Activated T-helper 1 cell treated with anti-CD3 and anti-CD28 coated beads, Interleukin-12 subunit alpha, Interleukin-12 subunit beta, Interleukin-2, Interleukin-4 antibody, amounts not matched to agents 30 ng/mL and 10 ng/mL and 1 ng/mL, durations not matched to agents 14 hours and 24 hours and 36 hours (primary cell): ENCODE measurements at regions of chr6 and their contacts with region 1.

Region 1: DNA sequence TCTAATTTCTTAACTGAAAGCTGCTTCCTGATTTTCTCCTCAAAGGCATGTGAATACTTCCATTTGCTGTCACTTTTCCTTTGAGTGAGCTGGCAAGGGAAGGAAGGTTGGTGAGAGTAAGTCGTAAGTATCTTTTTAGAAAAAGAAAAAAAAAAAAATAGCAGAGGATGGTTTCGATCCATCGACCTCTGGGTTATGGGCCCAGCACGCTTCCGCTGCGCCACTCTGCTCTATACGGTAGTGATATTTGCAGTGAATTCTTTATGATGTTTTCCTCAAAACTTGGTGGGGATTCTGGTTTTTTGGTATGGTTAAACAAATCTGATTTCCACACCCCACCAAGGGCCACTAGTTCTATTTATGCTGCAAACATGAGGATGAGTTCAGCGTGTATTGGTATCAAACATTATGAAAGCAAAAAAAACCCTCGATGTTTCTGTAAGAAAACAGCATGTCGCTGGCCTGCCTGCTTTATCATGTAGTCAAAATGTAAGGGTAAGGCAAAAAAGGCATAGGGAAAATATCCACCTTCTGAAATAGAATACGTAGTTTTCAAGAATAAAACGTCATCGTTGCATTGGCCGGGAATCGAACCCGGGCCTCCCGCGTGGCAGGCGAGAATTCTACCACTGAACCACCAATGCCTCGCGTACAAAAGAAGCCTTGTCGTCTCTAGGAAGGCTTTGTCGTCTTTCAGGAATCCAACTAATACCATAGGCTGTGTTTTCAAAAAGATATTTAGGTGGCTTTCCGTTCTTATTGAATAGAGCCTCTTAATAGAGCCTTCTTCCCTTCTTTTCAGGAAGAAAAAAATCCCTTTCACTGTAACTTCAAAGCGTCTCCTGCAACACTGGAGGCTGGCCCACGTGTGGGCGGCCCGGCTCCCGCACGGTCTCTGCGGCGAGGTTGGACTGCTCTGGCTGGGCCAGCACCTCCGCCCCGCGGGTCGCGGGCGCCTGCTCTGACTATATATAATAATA is 9.6 kb downstream of the OR2B2 start:
- DNase-seq: peak; percentile 77
- H3K4me3 Mint-ChIP-seq: peak overlapping the region; percentile 79
- H3K27ac Mint-ChIP-seq: peak overlapping the region; percentile 95
- H3K4me1 Mint-ChIP-seq: peaks cover 24% of the 10 kb centered on the region
- H3K27me3 Mint-ChIP-seq: peaks cover 26% of the 10 kb centered on the region

Region 2: GRCh38 chr6:27177485-27178406 is 724.9 kb before region 1 on chr6:
- intact Hi-C with region 1: loop called (anchors 2 kb)
- DNase-seq: peak; percentile 66
- H3K4me3 Mint-ChIP-seq: peak overlapping the region; percentile 95
- H3K27ac Mint-ChIP-seq: peak overlapping the region; percentile 93
- H3K4me1 Mint-ChIP-seq: peaks cover 7% of the 10 kb centered on the region
- H3K27me3 Mint-ChIP-seq: peaks cover 36% of the 10 kb centered on the region

Region 3: DNA sequence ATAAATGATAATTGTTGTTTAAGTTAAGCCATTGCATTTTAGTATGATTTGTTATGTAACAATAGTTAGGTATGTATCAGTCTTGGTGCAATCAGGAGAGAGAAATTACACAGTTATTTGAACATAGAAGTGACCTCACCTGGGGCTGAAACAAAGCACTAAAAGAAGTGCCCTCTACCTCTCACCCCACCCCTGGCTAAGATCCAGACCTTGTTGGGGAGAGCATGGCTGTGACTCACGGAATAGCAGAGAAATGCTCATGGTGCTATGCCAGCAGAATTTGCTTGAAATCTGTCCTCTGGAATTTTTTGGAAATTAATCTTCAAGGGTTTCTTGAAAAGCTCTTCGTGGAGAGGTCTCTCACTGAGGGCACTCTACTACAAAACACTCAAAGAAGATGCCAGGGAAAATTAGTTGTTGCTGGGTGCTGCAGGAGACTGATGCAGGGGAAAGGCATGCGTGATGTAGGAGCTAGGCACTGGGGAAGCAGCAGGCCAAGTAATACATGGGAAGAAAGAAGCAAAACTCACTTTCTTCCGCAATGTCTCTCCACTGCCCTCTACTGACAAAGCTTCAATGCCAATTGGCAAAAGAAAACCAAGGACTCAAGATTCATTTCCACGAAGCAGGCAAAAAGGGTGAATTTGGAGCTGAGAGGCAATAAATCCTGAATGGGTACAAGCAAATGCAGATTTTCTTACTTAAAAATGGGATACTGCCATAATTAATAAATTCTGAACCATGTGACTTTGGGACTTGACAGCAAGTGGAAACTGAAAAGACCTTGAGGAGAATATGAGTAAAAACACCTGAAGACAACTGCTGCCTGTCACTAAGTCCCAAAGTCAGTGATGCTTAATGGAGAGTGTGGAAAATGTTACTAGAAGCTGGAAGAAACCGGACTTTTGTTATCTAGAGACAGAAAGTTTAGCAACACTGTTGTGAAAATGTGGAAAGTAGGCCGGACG is 293.4 kb before region 1 on chr6:
- intact Hi-C with region 1: loop called (anchors 10 kb)
- DNase-seq: no peak
- H3K4me3 Mint-ChIP-seq: no peak overlapping the region
- H3K27ac Mint-ChIP-seq: no peak overlapping the region
- H3K4me1 Mint-ChIP-seq: peaks cover 18% of the 10 kb centered on the region
- H3K27me3 Mint-ChIP-seq: peaks cover 28% of the 10 kb centered on the region

Region 4: DNA sequence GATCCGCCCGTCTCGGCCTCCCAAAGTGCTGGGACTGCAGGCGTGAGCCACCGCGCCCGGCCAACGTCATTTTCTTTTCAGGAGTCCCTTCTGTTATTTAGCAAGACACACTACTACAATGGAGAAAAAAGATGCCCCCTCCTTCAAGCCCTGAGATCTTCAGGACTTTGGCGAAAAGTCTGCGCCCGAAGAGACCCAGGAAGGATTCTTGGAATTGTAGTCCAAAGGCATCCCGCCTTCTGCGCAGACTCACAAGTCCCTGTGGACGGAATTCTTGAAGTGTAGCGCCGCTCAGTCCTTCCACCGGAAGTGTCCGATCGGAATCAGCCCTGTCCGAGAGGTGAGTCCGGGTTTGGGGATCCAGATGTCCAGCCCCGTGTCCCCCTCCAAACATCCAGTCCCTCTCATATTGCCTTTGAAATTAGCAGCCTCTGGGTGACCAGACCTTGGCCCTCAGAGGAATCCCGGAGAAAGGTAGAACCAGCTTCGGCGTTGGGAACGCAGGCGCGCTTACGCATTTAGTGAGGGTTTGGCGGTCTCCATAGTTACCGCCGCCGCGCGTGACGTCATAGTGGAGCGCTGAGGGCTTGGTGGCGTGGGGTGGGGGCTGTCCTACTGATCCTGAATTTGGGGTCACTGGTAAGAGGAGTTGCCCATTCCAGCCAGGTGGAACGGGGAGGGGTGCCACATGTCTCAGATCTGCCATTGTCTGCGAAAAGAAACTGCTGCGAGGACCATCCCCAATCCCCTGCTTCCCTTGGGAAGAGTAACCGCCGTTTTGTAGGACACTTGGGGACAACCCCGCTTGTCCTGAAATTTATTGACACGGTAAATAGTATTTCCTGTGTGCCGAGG is 178.2 kb after region 1 on chr6:
- intact Hi-C with region 1: loop called (anchors 2 kb)
- DNase-seq: peak; percentile 82
- H3K4me3 Mint-ChIP-seq: peak overlapping the region; percentile 96
- H3K27ac Mint-ChIP-seq: peak overlapping the region; percentile 96
- H3K4me1 Mint-ChIP-seq: peaks cover 21% of the 10 kb centered on the region
- H3K27me3 Mint-ChIP-seq: peaks cover 2% of the 10 kb centered on the region

Region 5: DNA sequence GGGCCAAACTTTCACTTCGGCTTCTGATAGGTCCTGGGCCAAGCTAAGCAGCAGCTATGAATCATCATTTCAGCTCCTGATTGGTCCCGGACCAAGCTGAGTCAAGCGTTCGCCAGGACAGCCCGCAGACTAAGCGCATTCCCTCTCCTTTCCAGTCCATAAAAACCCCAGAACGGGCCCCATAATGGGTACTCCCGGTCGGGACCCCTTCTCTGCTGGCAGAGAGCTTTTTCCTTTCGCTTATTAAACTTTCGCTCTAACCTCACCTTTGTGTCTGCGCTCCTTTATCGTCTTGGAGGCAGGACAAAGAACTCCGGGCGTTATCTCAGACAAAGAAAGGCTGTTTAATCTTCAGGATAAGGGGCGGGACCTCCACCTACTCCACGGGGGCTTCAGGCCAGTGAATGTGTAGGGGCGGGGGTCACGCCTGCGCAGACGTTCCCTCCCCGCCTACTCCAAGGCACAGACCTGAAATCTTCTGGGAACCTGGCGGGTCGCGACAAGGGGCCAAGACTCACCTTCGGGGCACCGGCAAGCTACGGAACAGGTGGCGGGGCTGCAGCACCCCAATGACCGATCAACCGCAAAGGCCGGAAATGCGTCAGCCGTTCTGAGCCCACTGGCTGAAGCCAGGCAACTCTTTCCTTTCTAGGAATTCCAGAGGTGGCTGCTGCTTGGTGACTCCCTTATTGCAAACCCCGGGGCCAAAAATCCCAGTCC is 433.1 kb after region 1 on chr6 and contains the start of gene ZSCAN31:
- intact Hi-C with region 1: loop called (anchors 5 kb)
- DNase-seq: peak; percentile 56
- H3K4me3 Mint-ChIP-seq: no peak within 1 kb of the TSS
- H3K27ac Mint-ChIP-seq: no peak within 1 kb of the TSS
- H3K4me1 Mint-ChIP-seq: no peaks in the 10 kb centered on the region
- H3K27me3 Mint-ChIP-seq: peaks cover 7% of the 10 kb centered on the region
- total RNA-seq, gene ZSCAN31: 1.0 and 1.2 TPM in 2 replicates

Region 6: DNA sequence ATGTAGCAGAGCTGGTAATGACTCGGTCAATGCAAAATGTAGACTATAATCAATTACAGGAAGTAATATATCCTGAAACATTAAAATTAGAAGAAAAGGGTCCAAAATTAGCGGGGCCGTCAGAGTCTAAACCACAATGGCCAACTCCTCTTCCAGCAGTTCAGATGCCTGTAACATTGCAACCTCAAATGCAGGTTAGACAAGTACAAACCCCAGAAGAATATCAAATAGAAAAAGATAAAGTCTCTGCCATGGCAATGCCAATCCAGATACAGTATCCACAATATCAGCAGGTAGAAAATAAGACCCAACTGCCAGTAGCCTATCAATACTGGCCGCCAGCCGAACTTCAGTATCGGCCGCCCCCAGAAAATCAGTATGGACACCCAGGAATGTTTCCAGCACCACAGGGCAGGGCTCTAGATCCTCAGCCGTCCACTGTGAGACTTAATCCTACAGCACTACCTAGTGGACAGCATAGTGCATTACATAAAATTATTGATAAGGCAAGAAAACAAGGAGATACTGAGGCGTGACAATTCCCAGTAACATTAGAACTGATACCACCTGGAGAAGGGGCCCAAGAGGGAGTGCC is 781.4 kb after region 1 on chr6:
- intact Hi-C with region 1: loop called (anchors 10 kb)
- DNase-seq: no peak
- H3K4me3 Mint-ChIP-seq: no peak overlapping the region
- H3K27ac Mint-ChIP-seq: no peak overlapping the region
- H3K4me1 Mint-ChIP-seq: peaks cover 19% of the 10 kb centered on the region
- H3K27me3 Mint-ChIP-seq: peaks cover 65% of the 10 kb centered on the region

Region 7: GRCh38 chr6:28895134-28895812 is 992.6 kb after region 1 on chr6:
- intact Hi-C with region 1: loop called (anchors 5 kb)
- DNase-seq: peak; percentile 89
- H3K4me3 Mint-ChIP-seq: peak overlapping the region; percentile 90
- H3K27ac Mint-ChIP-seq: peak overlapping the region; percentile 100
- H3K4me1 Mint-ChIP-seq: peaks cover 25% of the 10 kb centered on the region
- H3K27me3 Mint-ChIP-seq: peaks cover 6% of the 10 kb centered on the region